Activated CD8-positive, alpha-beta T cell treated with anti-CD3 and anti-CD28 coated beads, Interleukin-2, amount 10 ng/mL, durations not matched to agents 7 days and 5 days (primary cell): ENCODE measurements at regions of chr11 and their contacts with region 1.

Region 1: DNA sequence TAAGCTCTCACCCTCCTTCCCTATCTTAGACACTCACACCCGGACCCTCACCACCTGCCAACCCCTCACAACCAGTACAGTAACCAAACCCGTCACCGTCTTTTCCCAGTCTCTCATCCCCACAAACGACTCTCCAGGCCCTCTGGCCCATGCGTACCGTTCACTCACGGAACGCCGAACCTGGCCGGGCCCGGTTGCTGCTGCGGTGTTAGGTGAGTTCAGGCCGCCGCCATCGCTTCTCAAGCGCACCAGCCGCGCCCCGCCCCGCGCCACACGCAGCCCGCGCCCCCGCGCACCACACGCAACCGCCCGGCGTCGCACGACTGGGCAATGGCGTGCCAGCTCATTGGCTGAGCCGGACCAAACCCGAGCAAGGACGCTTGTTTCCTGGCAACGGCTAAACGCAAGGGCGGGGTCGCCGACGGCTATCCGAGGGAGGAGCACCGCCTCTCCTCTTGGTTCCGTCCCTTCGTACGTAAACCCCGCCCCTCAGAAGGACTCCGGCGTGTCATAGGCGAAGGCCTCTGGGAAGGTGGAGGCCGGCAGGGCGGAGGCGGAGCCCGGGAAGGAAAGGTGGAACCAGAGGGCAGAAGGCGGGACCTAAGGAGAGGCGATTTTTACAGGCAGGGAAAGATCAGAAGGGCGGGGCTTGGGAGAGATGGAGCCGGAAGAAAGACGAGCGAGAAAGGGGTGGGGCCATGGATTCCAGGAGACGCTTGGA is at the start of gene FHIP1B:
- DNase-seq: peak; percentile 100
- ATAC-seq: peak; percentile 96
- H3K4me3 Mint-ChIP-seq: peak within 1 kb of the TSS; percentile 98
- H3K27ac Mint-ChIP-seq: peak within 1 kb of the TSS; percentile 95
- H3K4me1 Mint-ChIP-seq: peaks cover 32% of the 10 kb centered on the region
- H3K27me3 Mint-ChIP-seq: no peaks in the 10 kb centered on the region
- total RNA-seq, gene FHIP1B: 19.1 to 20.4 TPM

Region 2: DNA sequence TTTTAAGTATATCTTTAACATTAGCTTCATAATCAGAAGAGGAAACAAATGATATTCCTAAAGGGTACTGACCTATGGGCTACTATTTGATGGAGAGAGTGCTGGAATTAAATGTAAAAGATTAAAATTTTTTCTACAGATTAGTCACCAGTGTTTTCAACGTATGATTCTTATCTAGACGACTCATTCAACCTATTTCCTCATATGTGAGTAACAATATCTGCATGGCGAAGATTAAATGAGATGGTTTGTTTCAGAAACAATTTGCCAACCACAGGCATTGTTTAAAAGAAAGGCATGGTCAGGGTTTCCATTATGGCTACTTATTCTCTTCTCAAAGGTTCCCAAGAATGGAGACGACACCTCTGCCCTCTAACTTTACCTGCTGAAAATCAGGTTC is 106.7 kb before region 1 on chr11:
- CTCF ChIA-PET with region 1: no interaction called
- POLR2A ChIA-PET with region 1: no interaction called
- DNase-seq: no peak
- ATAC-seq: no peak
- H3K4me3 Mint-ChIP-seq: no peak overlapping the region
- H3K27ac Mint-ChIP-seq: no peak overlapping the region
- H3K4me1 Mint-ChIP-seq: no peaks in the 10 kb centered on the region
- H3K27me3 Mint-ChIP-seq: peaks cover 6% of the 10 kb centered on the region

Region 3: DNA sequence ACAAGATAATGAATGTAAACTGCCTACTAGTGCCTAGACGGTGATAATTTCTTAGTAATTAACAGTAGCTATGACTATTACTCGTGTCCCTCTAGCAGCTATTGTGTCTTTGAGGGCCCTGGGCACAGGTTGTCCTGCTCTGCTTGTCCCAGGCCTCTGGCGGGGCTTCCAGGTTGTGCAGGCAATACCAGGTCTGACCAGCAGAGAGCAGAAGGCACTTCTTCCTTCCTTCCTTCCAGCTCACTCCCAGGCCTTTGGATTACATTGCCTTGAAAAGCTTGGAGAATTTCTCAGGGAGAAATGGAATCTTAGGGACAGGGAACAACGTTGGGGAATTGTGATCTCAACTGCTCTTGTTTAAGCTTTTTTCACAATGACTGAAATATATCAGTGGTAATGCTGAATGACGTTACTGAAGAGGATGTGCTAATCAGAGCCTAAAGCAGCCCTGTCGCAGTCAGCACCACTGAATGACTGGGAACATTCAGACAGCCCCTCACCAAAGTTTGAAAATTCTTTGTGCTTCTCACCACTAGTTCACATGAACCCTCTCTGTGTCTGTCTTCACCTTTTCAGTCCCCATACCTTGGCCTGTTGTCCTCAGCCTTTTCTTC is 16.7 kb after region 1 on chr11:
- CTCF ChIA-PET with region 1: interaction called, 31 read pairs
- POLR2A ChIA-PET with region 1: no interaction called
- DNase-seq: peak; percentile 68
- ATAC-seq: peak; percentile 77
- H3K4me3 Mint-ChIP-seq: no peak overlapping the region
- H3K27ac Mint-ChIP-seq: no peak overlapping the region
- H3K4me1 Mint-ChIP-seq: no peaks in the 10 kb centered on the region
- H3K27me3 Mint-ChIP-seq: peaks cover 4% of the 10 kb centered on the region